Sciatic nerve (tissue), 2 donors: ENCODE measurements at regions of chr16 and their contacts with region 1.

Region 1: GRCh38 chr16:51429041-51429440 is 278.0 kb upstream of the SALL1 start:
- DNase-seq: no peak
- ATAC-seq: no peak

Region 2: DNA sequence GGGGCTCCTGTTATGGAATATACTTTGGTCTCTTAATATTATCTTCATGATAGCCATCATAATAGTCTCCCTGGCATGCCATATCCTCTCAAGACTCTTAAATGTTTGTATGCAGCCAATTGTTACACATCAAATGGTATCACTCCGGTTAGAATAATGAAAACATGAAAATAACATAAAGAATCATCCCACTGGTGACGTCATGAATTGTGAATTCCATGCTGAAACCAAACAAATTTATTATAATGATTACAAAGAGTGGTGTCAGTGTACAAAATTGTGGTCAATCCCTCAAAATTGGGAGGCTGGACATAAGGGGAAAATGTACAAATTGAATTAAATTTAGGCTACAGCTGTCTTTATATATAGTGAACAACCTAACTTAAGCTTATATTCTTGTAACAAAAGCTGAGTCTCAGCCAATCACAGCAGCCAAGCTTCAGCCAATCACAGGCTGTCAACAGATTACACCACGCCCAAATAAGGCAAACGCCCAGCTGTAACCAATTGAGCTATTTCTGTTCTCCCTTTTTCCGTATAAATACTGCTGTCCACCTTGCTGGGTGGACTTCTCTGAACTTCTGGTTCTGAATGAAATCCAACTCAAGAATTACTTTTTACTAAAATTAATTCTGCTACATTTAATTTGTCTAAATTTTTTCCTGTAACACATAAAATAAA is 1467.6 kb after region 1 on chr16:
- intact Hi-C with region 1: no loop called
- DNase-seq: no peak
- ATAC-seq: no peak

Region 3: DNA sequence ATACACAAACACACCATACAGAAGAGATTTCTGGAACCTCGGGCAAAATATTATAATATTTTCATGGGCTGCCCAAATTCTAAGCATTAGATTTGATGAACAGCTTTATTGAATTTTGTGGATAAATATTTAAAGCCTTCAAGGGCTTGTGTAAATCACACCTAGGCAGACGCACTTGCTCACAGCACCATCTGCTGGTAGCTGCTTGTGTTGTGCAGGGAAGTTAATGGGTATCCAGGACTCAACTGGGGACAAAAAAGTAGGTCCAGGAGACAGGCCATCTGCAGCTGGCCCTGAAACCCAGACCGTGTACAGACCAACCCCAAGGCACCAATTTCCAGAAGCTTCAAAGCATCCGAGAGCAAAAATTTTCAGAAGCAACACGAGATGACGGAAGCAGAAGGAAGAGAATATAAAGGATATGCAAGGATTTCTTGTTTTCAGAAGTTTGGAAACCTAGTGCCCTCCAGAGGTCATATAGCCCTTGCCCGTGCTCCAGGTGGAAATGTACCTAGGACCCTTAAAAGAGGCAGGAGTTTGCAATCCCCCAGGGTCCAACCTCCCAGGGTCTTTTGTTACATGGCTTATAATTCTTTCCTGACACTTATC is 1483.6 kb after region 1 on chr16:
- intact Hi-C with region 1: loop called (anchors 5 kb)
- DNase-seq: peak; percentile 76
- ATAC-seq: peak; percentile 77